Common myeloid progenitor, CD34-positive (primary cell): ENCODE measurements at regions of chr19 and their contacts with region 1.

Region 1: GRCh38 chr19:47243776-47244547 is 12.4 kb upstream of the CCDC9 start:
- DNase-seq: peak; percentile 97 to 99 (median 98)
- H3K4me3 ChIP-seq: peak overlapping the region in 2 of 7 experiments; percentile 32 to 53
- H3K27ac ChIP-seq: peak overlapping the region in 1 of 2 experiments; percentile 66
- H3K4me1 ChIP-seq: peaks cover 0 to 46% (median 27%) of the 10 kb centered on the region in 4 experiments
- H3K27me3 ChIP-seq: peaks cover 0 to 34% (median 22%) of the 10 kb centered on the region in 5 experiments

Region 2: DNA sequence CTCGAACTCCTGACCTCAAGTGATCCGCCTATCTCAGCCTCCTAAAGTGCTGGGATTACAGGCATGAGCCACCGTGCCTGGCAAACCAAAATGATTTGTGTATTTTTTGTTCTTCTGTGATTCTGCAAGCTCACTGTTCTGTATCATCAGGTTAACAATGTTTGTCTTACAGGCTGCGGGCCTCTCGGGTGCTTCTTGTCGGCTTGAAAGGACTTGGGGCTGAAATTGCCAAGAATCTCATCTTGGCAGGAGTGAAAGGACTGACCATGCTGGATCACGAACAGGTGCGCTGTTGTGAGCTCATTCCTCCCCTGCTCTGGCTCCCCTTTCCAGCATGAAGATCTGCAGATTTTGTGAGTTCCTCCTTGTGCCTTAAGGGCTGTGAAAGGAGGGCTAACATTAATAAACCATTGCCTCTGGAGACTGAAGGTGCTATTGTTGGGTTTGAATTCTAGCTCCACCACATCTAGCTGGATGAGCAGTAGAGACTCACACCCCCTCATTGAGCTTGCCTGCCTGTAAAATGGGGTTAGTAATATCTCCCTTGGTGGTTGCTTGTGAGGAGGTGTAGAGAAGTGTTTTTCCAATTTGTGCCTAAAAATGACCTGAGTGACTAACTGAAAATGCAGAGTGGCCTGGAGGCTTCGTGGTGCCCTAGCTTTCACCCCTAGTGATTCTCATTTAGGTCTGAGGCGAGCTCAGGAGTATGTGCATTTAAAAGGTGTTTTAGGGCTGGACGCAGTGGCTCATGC is 100.5 kb before region 1 on chr19:
- CTCF ChIA-PET with region 1: interaction called, 105 read pairs
- POLR2A ChIA-PET with region 1: no interaction called
- DNase-seq: no peak
- H3K4me3 ChIP-seq: no peak overlapping the region
- H3K27ac ChIP-seq: no peak overlapping the region
- H3K4me1 ChIP-seq: no peaks in the 10 kb centered on the region
- H3K27me3 ChIP-seq: no peaks in the 10 kb centered on the region

Region 3: GRCh38 chr19:47157431-47158321 is 86.3 kb before region 1 on chr19:
- CTCF ChIA-PET with region 1: interaction called, 28 read pairs
- POLR2A ChIA-PET with region 1: no interaction called
- DNase-seq: peak; percentile 49 to 69 (median 64)
- H3K4me3 ChIP-seq: peak overlapping the region in 3 of 7 experiments; percentile 11 to 31 (median 19)
- H3K27ac ChIP-seq: no peak overlapping the region
- H3K4me1 ChIP-seq: peaks cover 20 to 31% (median 30%) of the 10 kb centered on the region in 4 experiments
- H3K27me3 ChIP-seq: no peaks in the 10 kb centered on the region

Region 4: DNA sequence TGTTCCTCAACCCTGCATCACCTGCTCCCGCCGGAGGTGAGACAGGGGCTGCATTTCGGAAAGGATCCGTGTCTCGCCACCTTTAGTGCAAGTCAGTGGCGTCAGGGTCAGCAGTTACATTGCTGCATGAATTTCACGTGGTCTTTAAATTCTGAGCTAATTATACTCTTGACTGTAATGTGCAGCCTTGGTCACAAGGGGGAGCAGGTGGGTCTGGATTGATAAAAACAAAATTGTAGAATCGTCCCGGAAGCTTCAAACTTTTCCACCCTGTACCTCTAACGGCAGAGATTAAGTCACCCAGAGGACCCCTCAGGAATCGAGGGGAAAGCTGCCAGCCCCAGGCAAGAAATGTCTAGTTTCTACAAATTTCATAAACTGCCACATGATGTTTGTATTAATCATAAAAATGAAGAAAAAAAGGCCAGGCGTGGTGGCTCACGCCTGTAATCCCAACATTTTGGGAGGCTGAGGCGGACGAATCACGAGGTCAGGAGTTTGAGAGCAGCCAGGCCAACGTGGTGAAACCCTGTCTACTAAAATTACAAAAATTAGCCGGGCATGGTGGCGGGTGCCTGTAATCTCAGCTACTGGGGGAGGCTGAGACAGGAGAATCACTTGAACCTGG is 33.2 kb before region 1 on chr19:
- CTCF ChIA-PET with region 1: interaction called, 166 read pairs
- POLR2A ChIA-PET with region 1: interaction called, 28 read pairs
- DNase-seq: peak; percentile 80 to 88 (median 81)
- H3K4me3 ChIP-seq: no peak overlapping the region
- H3K27ac ChIP-seq: peak overlapping the region; percentile 54 to 82
- H3K4me1 ChIP-seq: peaks cover 2 to 13% (median 11%) of the 10 kb centered on the region in 4 experiments
- H3K27me3 ChIP-seq: no peaks in the 10 kb centered on the region

Region 5: DNA sequence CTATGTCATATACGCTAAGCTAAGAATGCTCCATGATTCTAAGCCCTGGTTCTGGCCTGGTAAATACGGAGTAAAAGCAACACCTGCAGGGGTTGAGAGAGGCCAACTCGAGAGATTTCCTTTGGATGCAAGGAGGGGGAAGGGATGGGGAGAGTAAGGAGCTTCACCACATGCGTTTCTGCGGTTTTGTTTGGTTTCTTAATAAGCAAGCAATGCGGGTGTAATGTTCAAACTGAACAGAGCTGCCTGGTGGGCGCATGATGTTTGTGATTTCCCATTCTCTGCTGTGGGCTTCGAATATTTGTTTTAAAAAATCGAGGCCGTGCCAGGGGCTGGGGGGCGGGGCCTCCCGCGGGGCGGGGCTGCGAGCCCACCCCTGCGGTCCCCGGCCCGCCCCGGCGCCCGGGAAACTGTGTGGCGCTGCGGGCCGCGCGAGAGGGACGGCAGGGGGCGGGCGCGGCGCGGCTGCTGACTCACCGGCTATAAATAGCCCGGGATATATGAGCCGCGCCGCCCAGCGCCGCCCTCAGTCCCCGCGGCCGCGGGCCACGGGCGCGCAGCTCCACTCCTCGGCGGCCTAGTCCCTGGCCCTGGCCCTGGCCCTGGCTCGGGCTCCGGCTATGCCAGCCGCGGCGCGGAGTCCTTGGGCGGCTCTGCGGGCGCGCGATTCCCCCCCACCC is 18.1 kb before region 1 on chr19:
- CTCF ChIA-PET with region 1: interaction called, 40 read pairs
- POLR2A ChIA-PET with region 1: interaction called, 54 read pairs
- DNase-seq: peak; percentile 87 to 93 (median 93)
- H3K4me3 ChIP-seq: peak overlapping the region in 6 of 7 experiments; percentile 23 to 80 (median 62)
- H3K27ac ChIP-seq: peak overlapping the region in 1 of 2 experiments; percentile 83
- H3K4me1 ChIP-seq: peaks cover 5 to 52% (median 49%) of the 10 kb centered on the region in 4 experiments
- H3K27me3 ChIP-seq: peaks cover 0 to 30% (median 8%) of the 10 kb centered on the region in 5 experiments

Region 6: GRCh38 chr19:47256688-47257443 is 12.9 kb after region 1 on chr19:
- CTCF ChIA-PET with region 1: interaction called, 49 read pairs
- POLR2A ChIA-PET with region 1: interaction called, 9 read pairs
- DNase-seq: peak; percentile 97 to 99 (median 99)
- H3K4me3 ChIP-seq: peak overlapping the region; percentile 27 to 81 (median 72)
- H3K27ac ChIP-seq: peak overlapping the region; percentile 83 to 93
- H3K4me1 ChIP-seq: peaks cover 4 to 19% (median 15%) of the 10 kb centered on the region in 4 experiments
- H3K27me3 ChIP-seq: no peaks in the 10 kb centered on the region